Heart left ventricle (tissue), 16 donors: ENCODE measurements at regions of chr1 and their contacts with region 1.

Region 1: GRCh38 chr1:159798893-159799292 is 3.3 kb upstream of the FCRL6 start:
- DNase-seq: peak in 4 of 5 donors; percentile 54 to 69 (median 64)
- ATAC-seq: peak; percentile 78 to 95 (median 88)
- H3K4me3 ChIP-seq: no peak overlapping the region
- H3K27ac ChIP-seq: peak overlapping the region in 1 of 12 donors; percentile 5
- H3K4me1 ChIP-seq: peaks cover 0 to 49% (median 0%) of the 10 kb centered on the region in 12 donors
- H3K27me3 ChIP-seq: peaks cover 0 to 18% (median 0%) of the 10 kb centered on the region in 9 donors
- CTCF ChIP-seq: peak; percentile 61 to 87 (median 78)
- POLR2A ChIP-seq: no peak

Region 2: DNA sequence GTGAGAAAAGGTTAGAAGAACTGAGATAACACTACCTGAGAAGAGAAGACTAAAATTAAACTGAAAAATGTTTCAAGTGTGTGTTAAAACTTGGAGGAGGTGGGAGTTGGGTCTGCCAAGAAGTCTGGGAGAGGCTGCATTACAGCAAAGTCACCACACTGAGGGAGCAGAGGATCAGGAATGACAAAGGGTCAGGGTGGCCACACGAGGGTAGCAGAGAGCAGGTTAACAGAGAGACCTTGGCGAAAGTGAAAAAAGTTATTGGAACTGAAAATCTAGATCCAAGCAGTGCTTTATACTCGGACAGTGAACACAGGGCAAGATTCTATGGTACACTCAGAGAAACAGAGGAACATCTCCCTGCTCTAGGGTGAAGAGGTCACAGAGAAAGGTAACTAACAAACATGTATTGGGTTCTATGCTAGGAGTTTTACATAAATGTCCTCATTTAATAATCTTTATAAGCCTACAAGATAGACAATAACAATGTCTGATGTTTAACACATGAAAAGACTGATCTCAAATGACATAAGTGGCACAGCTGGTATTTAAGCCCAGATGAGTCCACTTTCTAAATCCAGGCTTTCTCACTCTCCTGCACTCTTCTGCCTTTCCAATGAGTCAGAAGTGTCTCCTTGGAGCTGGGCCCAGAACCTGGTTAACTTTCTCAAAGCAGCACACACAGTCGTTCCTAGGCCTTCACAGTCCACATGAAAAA is 637.7 kb before region 1 on chr1:
- intact Hi-C with region 1: loop called in 1 of 10 experiments (anchors 10 kb)
- DNase-seq: peak; percentile 64 to 73 (median 67)
- ATAC-seq: peak; percentile 96 to 99 (median 98)
- H3K4me3 ChIP-seq: no peak overlapping the region
- H3K27ac ChIP-seq: peak overlapping the region in 2 of 12 donors; percentile 50 to 58
- H3K4me1 ChIP-seq: peaks cover 0 to 7% (median 0%) of the 10 kb centered on the region in 12 donors
- H3K27me3 ChIP-seq: peaks cover 0 to 28% (median 0%) of the 10 kb centered on the region in 9 donors
- CTCF ChIP-seq: peak; percentile 81 to 97 (median 91)
- POLR2A ChIP-seq: no peak

Region 3: GRCh38 chr1:159214149-159214760 is 584.6 kb before region 1 on chr1:
- intact Hi-C with region 1: loop called in 1 of 10 experiments (anchors 10 kb)
- DNase-seq: no peak
- ATAC-seq: peak in 3 of 4 donors; percentile 45 to 72 (median 61)
- H3K4me3 ChIP-seq: no peak overlapping the region
- H3K27ac ChIP-seq: no peak overlapping the region
- H3K4me1 ChIP-seq: peaks cover 0 to 6% (median 0%) of the 10 kb centered on the region in 12 donors
- H3K27me3 ChIP-seq: peaks cover 0 to 44% (median 8%) of the 10 kb centered on the region in 9 donors
- CTCF ChIP-seq: peak; percentile 82 to 95 (median 87)
- POLR2A ChIP-seq: no peak

Region 4: DNA sequence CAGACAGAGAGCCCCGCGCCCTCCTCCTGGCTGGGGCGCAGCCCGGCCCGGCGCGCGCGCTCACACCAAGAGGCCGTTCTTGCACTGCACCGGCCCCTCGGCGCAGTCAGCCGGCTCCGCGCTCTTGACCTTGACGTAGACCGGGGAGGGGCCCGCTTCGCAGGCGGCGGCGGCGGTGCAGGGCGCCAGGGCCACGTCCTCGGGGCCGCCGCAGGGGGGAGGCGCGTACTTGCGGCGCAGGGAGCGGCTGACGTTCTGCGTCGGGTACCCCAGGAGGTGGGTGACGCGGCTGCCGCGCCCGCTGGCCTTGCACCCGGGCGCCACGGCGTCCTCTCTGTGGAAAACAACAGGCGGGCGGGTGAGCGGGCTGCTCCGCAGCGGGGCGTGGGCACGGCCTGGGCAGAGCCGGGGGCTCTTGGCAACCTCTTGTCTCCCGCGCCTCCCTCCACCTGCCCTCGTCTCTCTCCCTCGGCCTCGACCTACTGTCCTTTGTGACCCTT is 55.9 kb after region 1 on chr1:
- intact Hi-C with region 1: loop called in 1 of 10 experiments (anchors 5 kb)
- DNase-seq: peak; percentile 90 to 95 (median 92)
- ATAC-seq: peak; percentile 82 to 98 (median 94)
- H3K4me3 ChIP-seq: peak overlapping the region; percentile 68 to 96 (median 78)
- H3K27ac ChIP-seq: peak overlapping the region; percentile 90 to 99 (median 98)
- H3K4me1 ChIP-seq: peaks cover 0 to 24% (median 11%) of the 10 kb centered on the region in 12 donors
- H3K27me3 ChIP-seq: no peaks in the 10 kb centered on the region
- CTCF ChIP-seq: peak in 4 of 12 donors; percentile 13 to 36 (median 30)
- POLR2A ChIP-seq: peak in 1 of 2 donors; percentile 87

Region 5: GRCh38 chr1:159936273-159936904 is 137.5 kb after region 1 on chr1:
- intact Hi-C with region 1: loop called in 2 of 10 experiments (anchors 5 to 10 kb)
- DNase-seq: peak; percentile 49 to 88 (median 71)
- ATAC-seq: peak; percentile 39 to 73 (median 68)
- H3K4me3 ChIP-seq: no peak overlapping the region
- H3K27ac ChIP-seq: no peak overlapping the region
- H3K4me1 ChIP-seq: peaks cover 0 to 23% (median 7%) of the 10 kb centered on the region in 12 donors
- H3K27me3 ChIP-seq: peaks cover 0 to 15% (median 0%) of the 10 kb centered on the region in 9 donors
- CTCF ChIP-seq: peak; percentile 90 to 99 (median 97)
- POLR2A ChIP-seq: no peak

Region 6: GRCh38 chr1:159945483-159946241 is 146.8 kb after region 1 on chr1 and contains the start of gene IGSF9:
- intact Hi-C with region 1: loop called in 9 of 10 experiments (anchors 1 to 10 kb)
- DNase-seq: peak; percentile 87 to 91 (median 89)
- ATAC-seq: peak; percentile 90 to 97 (median 96)
- H3K4me3 ChIP-seq: peak within 1 kb of the TSS; percentile 0 to 58 (median 46)
- H3K27ac ChIP-seq: no peak within 1 kb of the TSS
- H3K4me1 ChIP-seq: peaks cover 0 to 16% (median 10%) of the 10 kb centered on the region in 12 donors
- H3K27me3 ChIP-seq: peaks cover 0 to 23% (median 0%) of the 10 kb centered on the region in 9 donors
- CTCF ChIP-seq: peak; percentile 39 to 91 (median 72)
- POLR2A ChIP-seq: no peak
- total RNA-seq, gene IGSF9: 0.10 to 4.8 (median 0.12) TPM in 4 of 9 donors, not detected in the others

Region 7: GRCh38 chr1:159979257-159979656 is 180.4 kb after region 1 on chr1:
- intact Hi-C with region 1: no loop called
- DNase-seq: no peak
- ATAC-seq: no peak
- H3K4me3 ChIP-seq: no peak overlapping the region
- H3K27ac ChIP-seq: no peak overlapping the region
- H3K4me1 ChIP-seq: no peaks in the 10 kb centered on the region
- H3K27me3 ChIP-seq: peaks cover 0 to 28% (median 0%) of the 10 kb centered on the region in 9 donors
- CTCF ChIP-seq: no peak
- POLR2A ChIP-seq: no peak

Region 8: GRCh38 chr1:160006312-160006940 is 207.5 kb after region 1 on chr1:
- intact Hi-C with region 1: loop called in 9 of 10 experiments (anchors 2 to 10 kb)
- DNase-seq: peak; percentile 35 to 80 (median 70)
- ATAC-seq: peak in 3 of 4 donors; percentile 62 to 74 (median 64)
- H3K4me3 ChIP-seq: no peak overlapping the region
- H3K27ac ChIP-seq: no peak overlapping the region
- H3K4me1 ChIP-seq: no peaks in the 10 kb centered on the region
- H3K27me3 ChIP-seq: peaks cover 0 to 2% (median 0%) of the 10 kb centered on the region in 9 donors
- CTCF ChIP-seq: peak; percentile 62 to 88 (median 74)
- POLR2A ChIP-seq: no peak